CD8-positive, alpha-beta T cell (primary cell): ENCODE measurements at regions of chr1 and their contacts with region 1.

Region 1: DNA sequence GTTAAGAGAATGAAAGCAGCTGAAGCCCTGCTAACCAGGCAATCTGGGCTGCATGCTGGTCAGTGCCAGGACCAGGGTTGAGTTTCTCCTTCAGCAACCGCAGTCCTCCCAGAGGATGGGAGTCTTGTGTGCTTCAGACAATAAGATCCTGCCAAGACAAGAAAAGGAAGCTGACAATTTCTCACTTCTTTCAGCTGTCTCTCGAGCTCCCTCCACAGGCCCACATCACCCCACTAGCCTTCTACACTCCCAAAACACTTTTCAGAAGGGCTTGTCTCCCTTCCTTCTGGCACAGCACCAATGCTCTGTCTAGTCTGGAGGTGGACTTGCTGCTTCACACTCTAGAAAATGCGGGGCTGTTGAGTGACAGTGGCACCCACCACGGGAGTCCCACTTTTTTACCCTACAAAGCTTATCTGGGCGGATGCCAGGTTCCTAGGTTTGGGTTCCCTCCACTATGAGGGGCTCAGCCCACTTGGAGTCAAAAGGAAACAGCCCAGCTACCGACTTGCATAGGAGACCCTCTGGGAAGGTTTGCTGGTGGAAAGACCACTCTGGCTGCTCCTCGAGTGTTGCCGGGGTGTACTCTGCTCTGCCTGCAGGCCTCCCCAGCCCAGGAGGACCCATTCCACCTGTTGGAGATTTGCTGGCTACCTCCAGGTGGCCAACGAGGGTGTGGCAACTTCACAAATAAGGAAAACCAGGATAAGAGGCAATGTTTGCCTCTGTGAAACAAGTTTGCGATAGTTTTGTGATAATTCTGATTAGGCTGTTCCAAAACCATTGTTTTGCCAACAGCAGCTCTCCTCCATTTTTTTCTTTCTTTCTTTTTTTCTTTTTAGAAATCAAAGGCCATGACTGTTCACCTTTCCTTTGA is 68.9 kb downstream of the TENT5C start:
- DNase-seq: peak in 8 of 9 experiments; percentile 34 to 83 (median 67)
- ATAC-seq: peak; percentile 86
- H3K4me3 ChIP-seq: no peak overlapping the region
- H3K4me3 Mint-ChIP-seq: no peak overlapping the region
- H3K27ac ChIP-seq: no peak overlapping the region
- H3K27ac Mint-ChIP-seq: no peak overlapping the region
- H3K4me1 ChIP-seq: no peaks in the 10 kb centered on the region
- H3K4me1 Mint-ChIP-seq: peaks cover 6% of the 10 kb centered on the region
- H3K27me3 ChIP-seq: no peaks in the 10 kb centered on the region
- H3K27me3 Mint-ChIP-seq: peaks cover 14% of the 10 kb centered on the region
- CTCF ChIP-seq: peak; percentile 58

Region 2: GRCh38 chr1:117512743-117513321 is 161.9 kb before region 1 on chr1:
- CTCF ChIA-PET with region 1: interaction called, 34 read pairs
- POLR2A ChIA-PET with region 1: no interaction called
- intact Hi-C with region 1: no loop called
- DNase-seq: peak in 2 of 9 experiments; percentile 35 to 46
- ATAC-seq: peak; percentile 46
- H3K4me3 ChIP-seq: no peak overlapping the region
- H3K4me3 Mint-ChIP-seq: no peak overlapping the region
- H3K27ac ChIP-seq: no peak overlapping the region
- H3K27ac Mint-ChIP-seq: no peak overlapping the region
- H3K4me1 ChIP-seq: no peaks in the 10 kb centered on the region
- H3K4me1 Mint-ChIP-seq: no peaks in the 10 kb centered on the region
- H3K27me3 ChIP-seq: no peaks in the 10 kb centered on the region
- H3K27me3 Mint-ChIP-seq: no peaks in the 10 kb centered on the region
- CTCF ChIP-seq: peak; percentile 80

Region 3: DNA sequence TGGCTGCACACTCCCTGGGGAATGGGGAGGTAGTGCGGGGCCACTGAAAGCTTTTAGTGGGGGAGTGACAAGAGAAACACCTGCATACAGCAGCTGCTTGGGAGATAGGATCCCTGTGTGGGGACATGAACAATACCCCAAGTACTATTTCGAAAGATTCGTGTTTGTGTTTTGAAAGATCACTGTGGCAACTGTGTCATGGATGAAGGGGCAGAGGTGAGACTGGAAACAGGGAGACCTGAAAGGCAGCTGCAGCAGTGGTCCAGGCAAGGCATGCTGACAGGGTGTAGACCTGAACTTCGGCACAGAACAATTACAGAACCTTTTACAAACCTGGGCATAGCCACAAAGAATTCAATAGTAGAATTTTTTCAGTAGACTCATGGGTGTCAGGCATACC is 36.0 kb before region 1 on chr1:
- CTCF ChIA-PET with region 1: interaction called, 3 read pairs
- POLR2A ChIA-PET with region 1: no interaction called
- intact Hi-C with region 1: loop called (anchors 5 kb)
- DNase-seq: peak in 1 of 9 experiments; percentile 32
- ATAC-seq: no peak
- H3K4me3 ChIP-seq: no peak overlapping the region
- H3K4me3 Mint-ChIP-seq: no peak overlapping the region
- H3K27ac ChIP-seq: no peak overlapping the region
- H3K27ac Mint-ChIP-seq: no peak overlapping the region
- H3K4me1 ChIP-seq: peaks cover 5% of the 10 kb centered on the region
- H3K4me1 Mint-ChIP-seq: peaks cover 10% of the 10 kb centered on the region
- H3K27me3 ChIP-seq: no peaks in the 10 kb centered on the region
- H3K27me3 Mint-ChIP-seq: peaks cover 14% of the 10 kb centered on the region
- CTCF ChIP-seq: no peak

Region 4: GRCh38 chr1:117664314-117664713 is 10.4 kb before region 1 on chr1:
- CTCF ChIA-PET with region 1: interaction called, 18 read pairs
- POLR2A ChIA-PET with region 1: interaction called, 3 read pairs
- intact Hi-C with region 1: no loop called
- DNase-seq: peak in 7 of 9 experiments; percentile 30 to 96 (median 59)
- ATAC-seq: peak; percentile 77
- H3K4me3 ChIP-seq: no peak overlapping the region
- H3K4me3 Mint-ChIP-seq: no peak overlapping the region
- H3K27ac ChIP-seq: peak overlapping the region; percentile 44 to 84
- H3K27ac Mint-ChIP-seq: peak overlapping the region; percentile 85
- H3K4me1 ChIP-seq: peaks cover 53% of the 10 kb centered on the region
- H3K4me1 Mint-ChIP-seq: peaks cover 72% of the 10 kb centered on the region
- H3K27me3 ChIP-seq: no peaks in the 10 kb centered on the region
- H3K27me3 Mint-ChIP-seq: peaks cover 17% of the 10 kb centered on the region
- CTCF ChIP-seq: no peak

Region 5: GRCh38 chr1:117753654-117754054 is 78.9 kb after region 1 on chr1:
- CTCF ChIA-PET with region 1: interaction called, 23 read pairs
- POLR2A ChIA-PET with region 1: interaction called, 3 read pairs
- intact Hi-C with region 1: loop called (anchors 2 to 5 kb)
- DNase-seq: no peak
- ATAC-seq: no peak
- H3K4me3 ChIP-seq: no peak overlapping the region
- H3K4me3 Mint-ChIP-seq: no peak overlapping the region
- H3K27ac ChIP-seq: no peak overlapping the region
- H3K27ac Mint-ChIP-seq: no peak overlapping the region
- H3K4me1 ChIP-seq: no peaks in the 10 kb centered on the region
- H3K4me1 Mint-ChIP-seq: peaks cover 5% of the 10 kb centered on the region
- H3K27me3 ChIP-seq: no peaks in the 10 kb centered on the region
- H3K27me3 Mint-ChIP-seq: peaks cover 37% of the 10 kb centered on the region
- CTCF ChIP-seq: no peak